ENCODE measurements at regions of chr6 and their contacts with region 1.

Region 1: DNA sequence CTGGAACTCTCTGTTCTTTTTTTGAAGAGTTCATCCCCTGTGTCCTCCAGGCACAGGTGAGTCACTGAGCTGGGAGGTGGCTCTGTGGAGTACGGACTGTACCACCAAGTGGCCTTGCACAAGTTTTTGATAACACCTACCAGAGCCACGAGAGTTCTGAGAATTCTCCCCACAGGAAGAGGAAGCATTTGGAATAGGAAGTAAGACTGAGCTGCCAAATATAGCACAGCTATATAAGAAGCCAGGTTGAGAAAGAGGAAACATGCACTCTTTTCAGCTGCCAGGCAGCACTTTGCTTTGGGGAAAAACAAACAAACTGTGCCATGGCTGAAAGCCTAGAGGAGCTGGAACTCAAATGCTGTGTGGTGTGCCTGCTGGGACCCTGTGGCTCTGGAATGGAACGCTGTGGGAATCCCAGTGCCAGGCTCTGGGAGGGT is 70.8 kb upstream of the RIPOR2 start:
- DNase-seq: peak; percentile 55
- H3K4me3 Mint-ChIP-seq: peak overlapping the region; percentile 9
- H3K27ac Mint-ChIP-seq: peak overlapping the region; percentile 87
- H3K4me1 Mint-ChIP-seq: peaks cover 82% of the 10 kb centered on the region
- H3K27me3 Mint-ChIP-seq: no peaks in the 10 kb centered on the region

Region 2: DNA sequence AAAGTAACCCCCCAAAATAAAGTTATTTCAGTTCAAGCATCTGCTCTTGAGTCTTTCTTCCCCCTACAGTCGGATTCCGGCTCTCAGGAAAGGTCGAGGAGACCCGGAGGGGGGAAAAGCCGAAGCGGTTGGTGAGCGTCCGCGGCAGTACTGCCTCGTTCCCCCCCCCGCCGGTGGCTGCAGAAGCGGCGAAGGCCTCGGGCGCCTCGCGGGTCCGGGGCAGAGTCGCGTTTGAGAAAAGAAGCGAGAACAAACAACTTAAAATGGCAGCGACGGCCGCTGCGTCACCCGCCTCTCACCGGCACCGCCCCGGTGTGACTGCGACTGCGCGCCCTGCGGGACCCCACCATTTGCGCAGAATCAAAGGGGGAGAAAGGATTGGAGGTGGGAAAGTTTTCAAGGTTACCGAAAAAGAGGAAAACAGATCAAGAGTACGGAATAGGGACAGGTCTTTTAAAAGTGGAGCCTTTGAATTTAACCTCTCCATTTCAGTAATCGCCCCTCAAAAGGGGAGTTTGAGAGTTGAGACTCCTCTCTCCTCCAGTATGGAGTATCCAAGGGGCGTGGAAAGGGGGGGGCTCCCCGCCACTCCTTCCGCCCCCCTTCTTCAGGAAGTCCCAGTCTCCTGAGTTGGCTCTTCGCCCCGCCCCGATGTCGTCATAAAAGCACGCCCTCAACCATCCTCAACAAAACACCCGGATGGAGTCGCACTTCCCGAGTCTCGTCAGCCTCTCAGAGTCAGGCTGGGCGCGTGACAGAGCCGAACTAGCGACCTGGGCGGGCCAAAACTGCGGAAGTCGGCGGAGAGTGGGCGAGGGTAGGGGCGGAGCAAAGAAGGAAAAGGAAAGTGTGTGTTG is 285.8 kb before region 1 on chr6:
- intact Hi-C with region 1: loop called (anchors 1 kb)
- DNase-seq: peak; percentile 100
- H3K4me3 Mint-ChIP-seq: peak overlapping the region; percentile 100
- H3K27ac Mint-ChIP-seq: peak overlapping the region; percentile 96
- H3K4me1 Mint-ChIP-seq: peaks cover 47% of the 10 kb centered on the region
- H3K27me3 Mint-ChIP-seq: no peaks in the 10 kb centered on the region

Region 3: GRCh38 chr6:24927985-24928745 is 78.4 kb before region 1 on chr6:
- intact Hi-C with region 1: loop called (anchors 2 kb)
- DNase-seq: no peak
- H3K4me3 Mint-ChIP-seq: peak overlapping the region; percentile 92
- H3K27ac Mint-ChIP-seq: peak overlapping the region; percentile 97
- H3K4me1 Mint-ChIP-seq: peaks cover 90% of the 10 kb centered on the region
- H3K27me3 Mint-ChIP-seq: no peaks in the 10 kb centered on the region

Region 4: GRCh38 chr6:24960991-24961475 is 45.5 kb before region 1 on chr6:
- intact Hi-C with region 1: no loop called
- DNase-seq: no peak
- H3K4me3 Mint-ChIP-seq: peak overlapping the region; percentile 3
- H3K27ac Mint-ChIP-seq: peak overlapping the region; percentile 19
- H3K4me1 Mint-ChIP-seq: peaks cover 55% of the 10 kb centered on the region
- H3K27me3 Mint-ChIP-seq: no peaks in the 10 kb centered on the region

Region 5: GRCh38 chr6:24991810-24992467 is 14.6 kb before region 1 on chr6:
- intact Hi-C with region 1: loop called (anchors 1 kb)
- DNase-seq: peak; percentile 71
- H3K4me3 Mint-ChIP-seq: peak overlapping the region; percentile 21
- H3K27ac Mint-ChIP-seq: peak overlapping the region; percentile 80
- H3K4me1 Mint-ChIP-seq: peaks cover 40% of the 10 kb centered on the region
- H3K27me3 Mint-ChIP-seq: no peaks in the 10 kb centered on the region

Region 6: DNA sequence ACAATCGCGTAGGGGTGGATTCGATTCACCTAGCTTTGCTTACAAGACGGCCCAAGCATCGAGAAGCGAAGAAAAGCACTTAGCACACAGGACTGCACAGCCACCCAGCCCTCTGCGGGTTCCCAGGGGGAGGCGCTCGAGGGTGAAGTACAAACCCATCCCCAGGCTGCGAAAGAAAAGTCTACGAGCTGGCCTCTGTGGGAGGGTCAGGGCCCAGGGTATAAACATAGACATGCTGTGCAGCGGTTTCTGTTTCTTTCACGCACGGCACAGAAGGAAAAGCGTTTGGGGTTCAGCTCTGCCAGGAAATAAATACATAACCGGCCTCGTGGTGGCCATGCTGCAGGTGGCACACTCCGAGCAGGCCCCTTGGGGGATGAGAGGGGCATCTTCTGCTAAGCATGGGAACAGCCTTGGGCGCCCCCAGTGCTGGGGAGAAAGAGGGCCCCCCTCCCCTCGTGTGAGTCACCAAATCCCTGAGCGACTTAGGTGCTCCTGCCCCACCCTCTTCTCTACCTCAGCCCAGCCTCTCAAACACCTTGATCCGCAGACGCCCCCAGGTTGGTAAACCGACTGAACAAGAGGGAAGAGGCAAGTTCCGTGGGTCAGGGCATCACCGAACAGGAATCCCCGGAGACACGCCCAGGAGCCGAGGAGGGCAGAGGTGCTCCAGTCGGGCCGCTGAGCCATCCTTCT is 20.8 kb after region 1 on chr6:
- intact Hi-C with region 1: loop called (anchors 1 kb)
- DNase-seq: peak; percentile 72
- H3K4me3 Mint-ChIP-seq: peak overlapping the region; percentile 74
- H3K27ac Mint-ChIP-seq: peak overlapping the region; percentile 83
- H3K4me1 Mint-ChIP-seq: peaks cover 48% of the 10 kb centered on the region
- H3K27me3 Mint-ChIP-seq: no peaks in the 10 kb centered on the region

Region 7: GRCh38 chr6:25302677-25303128 is 296.1 kb after region 1 on chr6:
- intact Hi-C with region 1: no loop called
- DNase-seq: no peak
- H3K4me3 Mint-ChIP-seq: no peak overlapping the region
- H3K27ac Mint-ChIP-seq: no peak overlapping the region
- H3K4me1 Mint-ChIP-seq: no peaks in the 10 kb centered on the region
- H3K27me3 Mint-ChIP-seq: peaks cover 3% of the 10 kb centered on the region

Measured in activated T-helper 1 cell treated with anti-CD3 and anti-CD28 coated beads, Interleukin-12 subunit alpha, Interleukin-12 subunit beta, Interleukin-2, Interleukin-4 antibody, amounts not matched to agents 30 ng/mL and 10 ng/mL and 1 ng/mL, durations not matched to agents 14 hours and 24 hours and 36 hours (primary cell).